ENCODE measurements at regions of chr13 and their contacts with region 1.

Region 1: DNA sequence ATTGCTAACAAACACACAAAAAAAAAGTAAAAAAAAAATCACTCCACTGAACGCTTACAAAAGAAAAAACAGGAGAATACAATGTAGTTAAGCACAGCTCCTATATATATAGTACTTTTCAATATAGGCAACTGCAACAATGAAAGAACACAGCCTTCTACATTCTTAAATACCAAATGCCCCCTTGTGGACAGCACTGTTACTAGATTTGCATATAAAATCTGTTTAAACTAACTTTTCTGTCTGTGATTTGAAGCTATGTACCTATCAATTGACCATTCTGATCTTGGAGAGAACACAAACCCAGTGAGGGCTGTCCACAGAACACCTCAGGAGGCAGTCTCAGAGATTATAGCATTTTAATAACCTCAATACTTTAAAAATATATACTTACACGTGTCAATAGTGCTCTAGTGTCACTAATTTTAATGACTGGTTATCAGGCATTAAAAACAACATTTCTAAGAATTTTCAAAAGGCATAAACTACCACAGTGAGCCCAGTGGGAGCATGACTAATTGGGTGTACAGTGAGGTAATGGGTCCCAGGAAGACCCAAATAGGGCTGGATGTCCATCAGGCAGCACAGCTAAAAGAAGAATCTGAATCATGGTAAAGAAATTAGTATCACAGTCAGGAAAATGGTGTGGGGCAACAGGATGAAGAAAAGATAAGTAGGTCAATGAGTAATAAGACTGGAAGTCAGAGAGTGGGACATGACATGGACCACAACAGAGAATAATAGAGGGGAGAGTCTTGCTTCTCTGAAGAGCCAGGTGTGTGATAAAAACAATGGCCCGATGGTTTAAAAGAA is 22.2 kb downstream of the CCDC169 start:
- DNase-seq: peak in 1 of 10 donors; percentile 9

Region 2: DNA sequence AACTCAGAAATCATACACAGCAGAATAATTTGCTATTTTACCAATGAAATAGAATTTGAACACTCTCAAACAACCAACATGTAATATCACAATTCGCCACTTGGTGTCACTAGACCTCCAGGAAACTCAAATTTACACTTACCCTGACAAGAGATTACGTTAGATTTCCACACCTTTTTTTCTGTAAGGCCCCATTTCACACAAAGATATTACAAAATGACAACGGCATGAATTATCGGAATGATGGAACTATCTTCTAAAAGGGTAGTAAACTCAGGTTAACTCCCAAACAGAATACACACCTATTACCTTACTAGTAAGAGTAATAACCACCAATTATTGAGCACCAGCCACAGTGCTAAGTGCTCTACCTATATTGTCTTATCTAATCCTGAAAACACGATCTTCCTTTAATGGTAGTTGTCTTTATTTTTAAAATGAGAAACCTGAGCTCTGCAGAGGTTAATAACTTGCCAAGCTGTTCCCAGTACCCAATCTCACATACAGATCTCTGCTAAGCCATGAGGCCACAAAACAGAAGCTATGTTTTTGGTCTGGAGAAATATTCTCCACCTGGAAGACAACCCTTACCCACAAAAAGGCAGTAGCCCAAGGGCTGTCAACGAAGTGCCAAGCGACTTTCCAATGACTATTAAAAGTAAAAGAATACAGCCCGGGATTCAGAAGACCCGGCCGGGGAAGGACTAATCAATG is 296.6 kb before region 1 on chr13:
- intact Hi-C with region 1: loop called (anchors 1 kb)
- DNase-seq: no peak

Measured in posterior cingulate gyrus (tissue), 11 donors.